Dorsolateral prefrontal cortex (tissue), 120 donors: ENCODE measurements at regions of chr14 and their contacts with region 1.

Region 1: DNA sequence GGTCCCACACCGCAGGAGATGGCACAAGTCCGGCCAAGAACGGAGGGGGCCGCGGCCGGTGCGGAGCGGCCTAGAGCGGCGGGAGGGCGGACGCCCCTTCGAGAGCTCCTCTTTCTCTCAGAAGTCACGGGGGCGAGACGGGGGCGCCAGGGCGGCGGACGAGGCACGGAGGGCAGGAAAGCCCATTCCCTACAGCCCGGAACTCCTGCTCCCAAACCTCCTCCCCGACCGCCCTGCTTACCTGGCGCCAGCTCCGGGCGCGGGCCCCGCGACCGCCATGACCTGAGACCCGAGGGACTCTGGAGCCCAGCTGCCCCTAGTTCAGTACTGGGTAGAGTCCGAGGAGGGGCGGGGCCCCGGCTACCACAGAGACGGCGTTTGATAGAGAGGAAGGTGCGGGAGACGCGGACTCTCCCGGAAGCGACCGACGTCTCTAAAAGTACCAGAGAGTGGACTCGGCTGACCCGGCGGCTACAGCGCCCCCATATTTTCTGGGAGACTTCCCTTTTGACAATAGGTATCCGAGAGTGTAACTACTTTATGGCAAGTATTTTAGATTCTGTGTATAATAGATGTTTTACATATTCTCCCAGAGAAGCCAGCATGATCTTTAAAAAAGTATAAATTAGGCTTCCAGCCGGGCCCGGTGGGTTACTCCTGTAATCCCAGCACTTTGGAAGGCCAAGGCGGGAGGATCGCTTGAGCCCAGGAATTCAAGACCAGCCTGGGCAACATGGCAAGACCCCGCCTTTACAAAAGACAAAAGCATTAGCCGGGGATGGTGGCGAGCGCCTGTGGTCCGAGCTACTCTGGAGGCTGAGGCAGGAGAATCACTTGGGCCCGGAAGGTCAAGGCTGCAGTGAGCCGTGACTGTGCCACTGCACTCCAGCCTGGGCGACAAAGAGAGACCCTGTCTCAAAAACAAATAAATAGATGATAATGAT is at the start of gene ABCD4:
- DNase-seq: peak; percentile 95 to 98 (median 96)
- H3K4me3 ChIP-seq: peak within 1 kb of the TSS; percentile 63 to 100 (median 92)
- H3K27ac ChIP-seq: peak within 1 kb of the TSS; percentile 21 to 95 (median 86)
- H3K27me3 ChIP-seq: no peaks in the 10 kb centered on the region
- CTCF ChIP-seq: peak; percentile 72 to 98 (median 85)
- total RNA-seq, gene ABCD4: 45.9 to 169 (median 85.2) TPM

Region 2: GRCh38 chr14:74257078-74257989 is 45.6 kb before region 1 on chr14:
- intact Hi-C with region 1: loop called (anchors 5 kb)
- DNase-seq: peak in 6 of 10 donors; percentile 17 to 65 (median 56)
- H3K4me3 ChIP-seq: peak overlapping the region; percentile 45 to 98 (median 75)
- H3K27ac ChIP-seq: peak overlapping the region in 10 of 59 donors; percentile 3 to 78 (median 68)
- H3K27me3 ChIP-seq: no peaks in the 10 kb centered on the region
- CTCF ChIP-seq: peak; percentile 72 to 99 (median 96)

Region 3: GRCh38 chr14:74493343-74494261 is 190.7 kb after region 1 on chr14 and contains the start of gene ISCA2:
- intact Hi-C with region 1: loop called (anchors 5 kb)
- DNase-seq: peak; percentile 96 to 100 (median 98)
- H3K4me3 ChIP-seq: peak within 1 kb of the TSS; percentile 74 to 100 (median 94)
- H3K27ac ChIP-seq: peak within 1 kb of the TSS; percentile 61 to 96 (median 87)
- H3K27me3 ChIP-seq: no peaks in the 10 kb centered on the region
- CTCF ChIP-seq: peak in 25 of 56 donors; percentile 4 to 47 (median 18)
- total RNA-seq, gene ISCA2: 16.2 to 34.8 (median 23.3) TPM